Colonic mucosa (tissue), 4 donors: ENCODE measurements at regions of chr6 and their contacts with region 1.

Region 1: GRCh38 chr6:2791124-2791974 is 26.2 kb downstream of the WRNIP1 start:
- DNase-seq: peak; percentile 79
- H3K4me3 ChIP-seq: no peak overlapping the region
- H3K27ac ChIP-seq: peak overlapping the region; percentile 37
- H3K4me1 ChIP-seq: no peaks in the 10 kb centered on the region
- H3K27me3 ChIP-seq: no peaks in the 10 kb centered on the region
- CTCF ChIP-seq: peak; percentile 66

Region 2: GRCh38 chr6:2841264-2842138 is 50.2 kb after region 1 on chr6 and contains the start of gene SERPINB1:
- intact Hi-C with region 1: loop called (anchors 5 kb)
- DNase-seq: peak; percentile 94
- H3K4me3 ChIP-seq: peak within 1 kb of the TSS; percentile 45
- H3K27ac ChIP-seq: peak within 1 kb of the TSS; percentile 92
- H3K4me1 ChIP-seq: no peaks in the 10 kb centered on the region
- H3K27me3 ChIP-seq: no peaks in the 10 kb centered on the region
- CTCF ChIP-seq: no peak
- total RNA-seq, gene SERPINB1: 135 to 173 TPM

Region 3: GRCh38 chr6:2911171-2911570 is 119.8 kb after region 1 on chr6:
- intact Hi-C with region 1: loop called (anchors 5 kb)
- DNase-seq: no peak
- H3K4me3 ChIP-seq: no peak overlapping the region
- H3K27ac ChIP-seq: no peak overlapping the region
- H3K4me1 ChIP-seq: no peaks in the 10 kb centered on the region
- H3K27me3 ChIP-seq: no peaks in the 10 kb centered on the region
- CTCF ChIP-seq: no peak